Activated CD4-positive, alpha-beta T cell treated with anti-CD3 and anti-CD28 coated beads, Interleukin-2, amount 10 ng/mL, durations not matched to agents 24 days and 14 days (primary cell): ENCODE measurements at regions of chrX and their contacts with region 1.

Region 1: DNA sequence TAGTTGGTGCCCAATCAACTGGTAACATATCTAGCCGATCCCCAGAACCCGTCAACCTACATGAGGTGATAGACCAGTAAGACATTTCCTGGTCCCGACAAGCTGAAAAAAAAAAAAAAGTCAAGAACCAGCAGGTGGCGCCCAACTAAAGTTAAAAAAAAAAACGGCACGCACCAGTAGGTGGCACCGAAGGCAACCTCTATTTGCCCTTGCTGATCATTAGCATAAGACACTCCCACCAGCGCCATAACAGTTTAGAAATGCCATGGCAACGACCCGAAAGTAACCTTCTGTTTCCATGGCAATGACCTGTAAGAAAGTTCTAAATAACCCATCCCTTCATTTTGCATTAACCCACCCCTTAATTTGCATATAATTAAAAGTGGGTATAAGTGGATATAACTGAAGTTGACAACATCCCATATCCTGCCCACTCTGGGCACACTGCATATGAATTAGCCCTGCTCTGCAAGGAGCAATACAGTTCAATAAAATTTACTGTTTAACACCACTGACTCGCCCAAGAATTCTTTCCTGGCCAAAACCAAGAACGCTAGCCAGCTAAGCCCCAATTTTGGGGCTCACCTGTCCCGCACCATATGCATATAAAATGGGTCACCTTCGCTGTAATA is 83.9 kb upstream of the SPANXB1 start:
- DNase-seq: peak; percentile 79
- H3K4me3 Mint-ChIP-seq: peak overlapping the region; percentile 30
- H3K27ac Mint-ChIP-seq: peak overlapping the region; percentile 85
- H3K4me1 Mint-ChIP-seq: peaks cover 16% of the 10 kb centered on the region
- H3K27me3 Mint-ChIP-seq: no peaks in the 10 kb centered on the region

Region 2: DNA sequence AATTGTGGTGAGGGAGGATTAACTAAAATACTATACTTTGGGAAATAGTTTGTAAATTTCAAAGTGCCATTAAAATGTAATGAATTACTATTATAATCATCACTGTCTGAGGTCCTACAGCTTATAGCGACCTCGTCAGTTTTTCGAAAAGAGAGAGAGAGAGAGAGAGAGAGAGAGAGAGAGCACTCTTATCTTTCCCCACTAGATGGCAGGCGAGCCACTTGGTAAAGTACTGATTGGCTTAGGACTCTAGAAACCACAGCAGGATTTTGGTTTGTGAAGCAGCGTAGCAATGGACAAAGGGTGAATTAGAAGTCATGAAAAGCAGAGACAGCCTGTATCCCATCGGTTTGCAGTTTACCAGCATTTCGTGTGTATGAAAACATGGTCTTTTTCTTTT is 156.5 kb before region 1 on chrX:
- intact Hi-C with region 1: loop called (anchors 10 kb)
- DNase-seq: peak; percentile 74
- H3K4me3 Mint-ChIP-seq: no peak overlapping the region
- H3K27ac Mint-ChIP-seq: no peak overlapping the region
- H3K4me1 Mint-ChIP-seq: peaks cover 3% of the 10 kb centered on the region
- H3K27me3 Mint-ChIP-seq: peaks cover 14% of the 10 kb centered on the region

Region 3: DNA sequence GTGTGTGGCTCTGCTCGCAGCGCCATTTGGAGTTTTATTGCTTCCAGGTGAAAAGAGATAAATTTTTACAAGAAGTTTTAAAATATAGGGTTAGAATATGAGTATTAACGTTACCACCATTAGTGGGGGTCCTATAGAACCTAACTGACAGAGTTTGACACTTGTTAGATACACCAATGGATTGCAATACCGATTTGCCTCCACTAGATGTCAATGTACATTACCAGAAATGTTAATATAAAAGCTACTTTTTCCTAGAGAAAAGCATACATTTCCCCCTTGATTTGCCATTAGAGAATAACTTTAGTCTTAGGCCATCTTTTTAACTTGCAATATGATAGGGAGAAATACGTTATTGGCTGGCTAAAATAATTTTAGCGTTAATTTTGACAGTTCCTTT is 100.6 kb before region 1 on chrX:
- intact Hi-C with region 1: loop called (anchors 1 kb)
- DNase-seq: no peak
- H3K4me3 Mint-ChIP-seq: no peak overlapping the region
- H3K27ac Mint-ChIP-seq: no peak overlapping the region
- H3K4me1 Mint-ChIP-seq: peaks cover 6% of the 10 kb centered on the region
- H3K27me3 Mint-ChIP-seq: no peaks in the 10 kb centered on the region

Region 4: GRCh38 chrX:140933016-140933415 is 14.5 kb after region 1 on chrX:
- intact Hi-C with region 1: no loop called
- DNase-seq: no peak
- H3K4me3 Mint-ChIP-seq: no peak overlapping the region
- H3K27ac Mint-ChIP-seq: no peak overlapping the region
- H3K4me1 Mint-ChIP-seq: no peaks in the 10 kb centered on the region
- H3K27me3 Mint-ChIP-seq: no peaks in the 10 kb centered on the region

Region 5: DNA sequence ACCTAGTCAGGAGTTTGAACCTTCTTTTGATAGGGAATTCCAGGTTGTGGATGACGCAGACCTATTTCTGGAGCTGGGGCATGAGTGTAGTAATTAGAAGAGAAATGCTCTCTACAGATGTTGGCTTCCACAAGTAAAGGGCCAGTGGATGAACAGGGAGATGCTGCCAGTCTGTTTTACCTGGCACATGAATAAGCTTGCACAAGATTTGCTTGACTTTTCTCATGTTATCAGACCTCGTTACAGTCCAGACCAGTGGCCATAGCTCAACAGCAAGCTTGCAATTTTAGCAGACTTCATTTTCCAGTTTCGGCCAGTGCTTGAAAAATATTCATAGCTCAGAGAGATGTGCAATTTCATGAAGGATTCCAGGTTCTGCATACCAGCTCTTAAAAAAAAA is 56.9 kb after region 1 on chrX:
- intact Hi-C with region 1: no loop called
- DNase-seq: no peak
- H3K4me3 Mint-ChIP-seq: no peak overlapping the region
- H3K27ac Mint-ChIP-seq: no peak overlapping the region
- H3K4me1 Mint-ChIP-seq: no peaks in the 10 kb centered on the region
- H3K27me3 Mint-ChIP-seq: no peaks in the 10 kb centered on the region

Region 6: DNA sequence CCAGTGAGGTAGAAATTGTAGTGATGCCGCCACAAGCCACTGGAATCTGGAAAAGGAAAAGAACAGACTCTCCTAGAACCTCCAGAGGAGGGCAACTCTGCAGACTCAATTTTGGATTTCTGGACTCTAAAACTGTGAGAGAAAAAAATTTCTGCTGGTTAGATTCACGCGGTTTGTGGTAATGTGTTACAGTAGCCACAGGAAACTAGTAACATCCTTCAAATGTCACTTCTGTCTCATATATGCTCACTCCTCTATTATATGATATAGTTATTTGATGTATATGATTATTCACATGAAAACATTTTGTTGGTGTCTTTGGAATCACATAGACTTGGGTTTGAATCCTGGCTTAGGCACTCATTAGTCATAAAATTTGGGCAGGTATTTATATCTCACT is 239.6 kb after region 1 on chrX:
- intact Hi-C with region 1: loop called (anchors 5 kb)
- DNase-seq: no peak
- H3K4me3 Mint-ChIP-seq: no peak overlapping the region
- H3K27ac Mint-ChIP-seq: no peak overlapping the region
- H3K4me1 Mint-ChIP-seq: peaks cover 3% of the 10 kb centered on the region
- H3K27me3 Mint-ChIP-seq: no peaks in the 10 kb centered on the region

Region 7: DNA sequence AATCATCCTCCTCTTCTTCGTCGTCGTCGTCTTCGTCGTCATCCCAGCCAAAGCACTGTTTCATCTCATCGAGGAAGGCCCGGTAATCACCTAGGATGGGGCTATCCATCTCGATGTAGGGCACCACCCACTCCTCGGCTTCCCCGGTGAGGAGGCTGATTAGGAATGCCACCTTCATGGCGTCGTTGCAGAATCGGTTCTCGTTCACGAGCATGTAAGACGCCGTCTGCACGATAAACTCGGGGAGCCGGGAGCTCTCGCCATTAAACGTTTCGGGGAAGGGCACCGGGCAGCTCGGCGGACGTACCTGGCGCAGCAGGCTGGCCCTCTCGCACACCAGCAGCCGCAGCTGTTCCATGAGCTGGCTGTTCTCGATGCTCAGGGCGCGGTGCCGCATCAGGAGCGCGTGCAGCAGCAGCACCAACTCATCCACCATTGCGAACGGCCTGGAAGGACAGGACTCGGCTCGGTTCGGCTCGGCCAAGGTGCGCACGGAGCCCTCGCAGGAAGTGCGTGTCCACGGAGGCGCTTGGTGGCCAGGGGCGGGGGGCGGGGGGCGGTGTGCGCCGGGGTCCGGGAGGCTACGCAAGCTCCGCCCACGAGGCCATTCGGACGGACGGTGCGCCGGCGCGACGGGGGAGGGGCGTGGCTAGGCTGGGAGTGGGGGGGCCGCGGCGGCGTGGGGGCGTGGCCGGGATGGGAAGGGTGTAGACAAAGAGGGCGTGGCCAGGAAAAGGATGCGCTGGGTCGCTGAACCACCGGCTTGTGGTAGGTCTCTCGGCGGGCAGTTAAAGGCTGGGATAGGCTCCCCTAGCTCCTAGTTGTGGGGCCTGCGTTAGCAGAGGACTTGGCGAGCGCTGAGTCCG is 258.3 kb after region 1 on chrX and contains the start of gene LDOC1:
- intact Hi-C with region 1: loop called (anchors 2 kb)
- DNase-seq: peak; percentile 86
- H3K4me3 Mint-ChIP-seq: peak within 1 kb of the TSS; percentile 81
- H3K27ac Mint-ChIP-seq: peak within 1 kb of the TSS; percentile 63
- H3K4me1 Mint-ChIP-seq: peaks cover 4% of the 10 kb centered on the region
- H3K27me3 Mint-ChIP-seq: no peaks in the 10 kb centered on the region
- total RNA-seq, gene LDOC1: 4.4 and 7.1 TPM in 2 replicates

Region 8: DNA sequence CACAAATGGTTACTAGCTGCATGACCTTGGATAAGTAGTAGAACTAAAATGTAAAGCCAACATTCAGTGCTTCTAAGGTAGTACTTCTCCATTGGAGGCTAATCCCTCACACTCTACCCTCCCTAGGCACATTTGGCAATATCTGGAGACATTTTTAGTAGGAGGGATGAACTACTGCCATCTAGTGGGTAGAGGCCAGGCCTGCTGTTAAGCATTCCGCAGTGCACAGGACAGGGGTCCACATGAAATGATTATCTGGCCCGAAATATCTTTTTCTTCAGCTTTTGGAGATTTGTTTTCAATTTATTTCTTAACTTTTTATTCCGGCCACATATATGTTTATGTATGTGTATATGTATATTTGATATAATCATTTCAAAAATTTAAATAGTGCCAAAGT is 359.8 kb after region 1 on chrX:
- intact Hi-C with region 1: loop called (anchors 5 kb)
- DNase-seq: peak; percentile 51
- H3K4me3 Mint-ChIP-seq: no peak overlapping the region
- H3K27ac Mint-ChIP-seq: no peak overlapping the region
- H3K4me1 Mint-ChIP-seq: no peaks in the 10 kb centered on the region
- H3K27me3 Mint-ChIP-seq: no peaks in the 10 kb centered on the region